Endothelial cell of umbilical vein (primary cell): ENCODE measurements at regions of chr9 and their contacts with region 1.

Region 1: GRCh38 chr9:27529316-27530278 is at the start of gene MOB3B:
- DNase-seq: peak; percentile 60
- H3K4me3 ChIP-seq: peak within 1 kb of the TSS; percentile 32 to 44 (median 32)
- H3K27ac ChIP-seq: no peak within 1 kb of the TSS
- H3K4me1 ChIP-seq: peaks cover 9% of the 10 kb centered on the region
- H3K27me3 ChIP-seq: peaks cover 19 to 35% of the 10 kb centered on the region in 2 experiments
- CTCF ChIP-seq: peak; percentile 84 to 90
- POLR2A ChIP-seq: no peak
- total RNA-seq, gene MOB3B: not detected in 2 replicates

Region 2: DNA sequence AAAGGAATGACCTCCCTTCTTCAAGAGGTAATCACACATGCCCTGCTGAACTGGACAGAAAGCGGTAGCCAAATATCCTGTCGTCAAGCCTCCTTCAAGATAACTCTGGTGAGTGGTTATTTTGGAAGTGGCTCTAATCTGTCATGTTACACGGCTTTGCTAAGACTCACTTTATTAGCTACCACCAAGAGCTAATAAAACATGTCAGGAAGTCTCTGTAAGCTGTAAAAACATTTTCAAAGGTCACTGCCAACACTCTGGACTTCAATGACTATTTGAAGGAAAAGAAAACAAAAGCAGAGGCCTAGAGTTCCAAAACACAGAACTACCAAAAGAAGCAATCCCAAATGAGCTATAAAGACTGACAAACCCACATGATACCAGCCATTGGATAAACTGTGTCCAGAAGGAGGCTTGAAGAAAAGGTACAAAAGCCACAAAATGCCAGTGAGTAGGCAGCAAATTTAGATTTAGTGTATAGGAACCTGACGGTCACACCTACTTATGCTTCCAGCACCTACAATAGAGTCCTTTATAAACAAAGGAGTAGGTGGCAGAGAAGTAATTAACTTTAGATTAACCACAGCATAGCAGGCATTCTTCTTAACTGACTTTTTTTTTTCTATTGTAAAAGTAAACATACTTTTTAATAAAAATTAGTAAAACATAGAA is 135.3 kb before region 1 on chr9:
- CTCF ChIA-PET with region 1: interaction called, 4 read pairs
- POLR2A ChIA-PET with region 1: no interaction called
- dilution Hi-C with region 1: no loop called
- intact Hi-C with region 1: loop called (anchors 1 kb)
- DNase-seq: peak; percentile 92
- H3K4me3 ChIP-seq: no peak overlapping the region
- H3K27ac ChIP-seq: no peak overlapping the region
- H3K4me1 ChIP-seq: peaks cover 5% of the 10 kb centered on the region
- H3K27me3 ChIP-seq: peaks cover 6 to 16% of the 10 kb centered on the region in 2 experiments
- CTCF ChIP-seq: no peak
- POLR2A ChIP-seq: no peak

Region 3: GRCh38 chr9:27548055-27548741 is 18.6 kb after region 1 on chr9:
- CTCF ChIA-PET with region 1: interaction called, 9 read pairs
- POLR2A ChIA-PET with region 1: no interaction called
- dilution Hi-C with region 1: no loop called
- intact Hi-C with region 1: loop called (anchors 1 kb)
- DNase-seq: peak; percentile 41
- H3K4me3 ChIP-seq: no peak overlapping the region
- H3K27ac ChIP-seq: no peak overlapping the region
- H3K4me1 ChIP-seq: no peaks in the 10 kb centered on the region
- H3K27me3 ChIP-seq: no peaks in the 10 kb centered on the region
- CTCF ChIP-seq: peak in 1 of 2 donors; percentile 29
- POLR2A ChIP-seq: no peak

Region 4: GRCh38 chr9:27945388-27945787 is 415.8 kb after region 1 on chr9:
- CTCF ChIA-PET with region 1: no interaction called
- POLR2A ChIA-PET with region 1: no interaction called
- dilution Hi-C with region 1: no loop called
- intact Hi-C with region 1: no loop called
- DNase-seq: no peak
- H3K4me3 ChIP-seq: no peak overlapping the region
- H3K27ac ChIP-seq: no peak overlapping the region
- H3K4me1 ChIP-seq: no peaks in the 10 kb centered on the region
- H3K27me3 ChIP-seq: no peaks in the 10 kb centered on the region
- CTCF ChIP-seq: no peak
- POLR2A ChIP-seq: no peak